Sciatic nerve (tissue), 2 donors: ENCODE measurements at regions of chrX and their contacts with region 1.

Region 1: GRCh38 chrX:137051978-137052642 is 18.3 kb upstream of the GPR101 start:
- DNase-seq: peak; percentile 79
- ATAC-seq: peak; percentile 84

Region 2: GRCh38 chrX:136711147-136711546 is 341.0 kb before region 1 on chrX:
- intact Hi-C with region 1: loop called (anchors 5 kb)
- DNase-seq: no peak
- ATAC-seq: peak; percentile 71